Adrenal gland (tissue), 19 donors: ENCODE measurements at regions of chr9 and their contacts with region 1.

Region 1: DNA sequence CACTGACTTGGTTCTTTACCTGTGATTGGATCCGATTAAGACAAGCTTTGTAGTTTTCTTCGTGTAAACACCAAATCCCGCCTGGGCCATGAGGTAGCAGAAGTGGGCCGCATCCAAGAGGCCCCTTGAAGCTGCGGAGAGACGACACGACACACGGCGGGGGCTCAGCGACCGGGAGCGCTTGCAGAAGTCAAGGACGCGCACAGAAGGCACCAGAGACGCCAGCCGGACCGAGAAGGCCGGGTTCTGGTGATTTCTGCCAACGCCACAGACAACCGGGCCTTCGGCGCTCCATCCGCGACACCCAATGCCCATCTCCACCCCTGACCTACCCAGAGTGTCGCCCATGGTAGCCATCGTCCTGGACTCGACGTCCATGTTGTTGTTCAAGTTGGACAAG is 19.8 kb upstream of the INPP5E start:
- DNase-seq: no peak
- H3K4me3 ChIP-seq: no peak overlapping the region
- H3K27ac ChIP-seq: no peak overlapping the region
- H3K4me1 ChIP-seq: peaks cover 0 to 5% of the 10 kb centered on the region in 2 donors
- H3K27me3 ChIP-seq: no peaks in the 10 kb centered on the region
- CTCF ChIP-seq: no peak
- POLR2A ChIP-seq: no peak

Region 2: DNA sequence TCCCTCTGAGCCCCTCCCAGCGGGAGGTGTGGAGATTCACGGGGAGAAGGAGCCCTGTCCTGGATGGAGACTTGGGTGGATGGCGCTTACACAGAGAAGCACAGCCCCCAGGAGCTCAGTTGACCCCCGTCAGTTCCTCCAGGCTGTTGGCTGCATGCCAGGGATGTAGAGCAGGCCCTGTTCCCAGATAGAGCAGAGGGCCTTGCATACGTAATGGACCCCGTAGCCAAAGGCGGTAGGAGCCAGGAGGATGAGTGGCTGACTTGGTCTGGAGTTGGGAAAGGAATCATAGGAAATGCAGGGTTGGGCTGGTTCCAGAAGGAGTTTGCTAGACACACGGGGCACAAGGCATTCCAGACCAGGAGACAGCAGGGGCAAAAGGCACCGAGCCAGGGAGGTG is 46.5 kb before region 1 on chr9:
- intact Hi-C with region 1: no loop called
- DNase-seq: no peak
- H3K4me3 ChIP-seq: no peak overlapping the region
- H3K27ac ChIP-seq: no peak overlapping the region
- H3K4me1 ChIP-seq: peaks cover 18 to 26% of the 10 kb centered on the region in 2 donors
- H3K27me3 ChIP-seq: no peaks in the 10 kb centered on the region
- CTCF ChIP-seq: no peak
- POLR2A ChIP-seq: no peak

Region 3: GRCh38 chr9:136429683-136430590 is 29.5 kb before region 1 on chr9:
- intact Hi-C with region 1: loop called in 1 of 2 experiments (anchors 2 kb)
- DNase-seq: no peak
- H3K4me3 ChIP-seq: no peak overlapping the region
- H3K27ac ChIP-seq: no peak overlapping the region
- H3K4me1 ChIP-seq: no peaks in the 10 kb centered on the region
- H3K27me3 ChIP-seq: no peaks in the 10 kb centered on the region
- CTCF ChIP-seq: no peak
- POLR2A ChIP-seq: no peak